Endothelial cell of umbilical vein (primary cell): ENCODE measurements at regions of chr4 and their contacts with region 1.

Region 1: GRCh38 chr4:182593864-182594263 is 323.3 kb downstream of the DCTD start:
- DNase-seq: peak; percentile 95
- H3K4me3 ChIP-seq: peak overlapping the region in 1 of 3 experiments; percentile 44
- H3K27ac ChIP-seq: peak overlapping the region; percentile 91
- H3K4me1 ChIP-seq: peaks cover 26% of the 10 kb centered on the region
- H3K27me3 ChIP-seq: no peaks in the 10 kb centered on the region
- CTCF ChIP-seq: no peak
- POLR2A ChIP-seq: no peak

Region 2: GRCh38 chr4:182354867-182355266 is 239.0 kb before region 1 on chr4:
- CTCF ChIA-PET with region 1: no interaction called
- POLR2A ChIA-PET with region 1: no interaction called
- dilution Hi-C with region 1: no loop called
- intact Hi-C with region 1: no loop called
- DNase-seq: no peak
- H3K4me3 ChIP-seq: no peak overlapping the region
- H3K27ac ChIP-seq: no peak overlapping the region
- H3K4me1 ChIP-seq: no peaks in the 10 kb centered on the region
- H3K27me3 ChIP-seq: no peaks in the 10 kb centered on the region
- CTCF ChIP-seq: no peak
- POLR2A ChIP-seq: no peak

Region 3: DNA sequence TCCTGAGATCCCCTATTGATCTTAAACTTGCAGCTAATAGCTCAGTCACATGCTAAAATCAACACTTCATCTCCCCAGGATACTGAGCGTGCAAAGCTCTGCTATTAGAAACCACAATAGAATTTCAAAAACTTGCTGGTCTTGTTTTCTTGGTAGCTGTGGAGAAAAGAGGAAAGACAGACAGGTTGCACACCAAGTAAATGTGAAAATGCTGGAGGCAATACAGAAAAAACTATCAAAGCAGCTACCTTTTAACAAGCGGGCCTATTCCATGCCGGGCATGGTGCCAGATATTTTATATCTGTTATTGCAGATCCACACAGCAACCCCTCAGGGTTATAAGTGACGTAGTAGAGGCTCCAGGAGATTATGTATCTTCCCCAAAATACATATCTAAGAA is 151.4 kb after region 1 on chr4:
- CTCF ChIA-PET with region 1: interaction called, 3 read pairs
- POLR2A ChIA-PET with region 1: interaction called, 4 read pairs
- dilution Hi-C with region 1: no loop called
- intact Hi-C with region 1: loop called (anchors 5 kb)
- DNase-seq: peak; percentile 37
- H3K4me3 ChIP-seq: no peak overlapping the region
- H3K27ac ChIP-seq: no peak overlapping the region
- H3K4me1 ChIP-seq: peaks cover 25% of the 10 kb centered on the region
- H3K27me3 ChIP-seq: no peaks in the 10 kb centered on the region
- CTCF ChIP-seq: no peak
- POLR2A ChIP-seq: no peak

Region 4: DNA sequence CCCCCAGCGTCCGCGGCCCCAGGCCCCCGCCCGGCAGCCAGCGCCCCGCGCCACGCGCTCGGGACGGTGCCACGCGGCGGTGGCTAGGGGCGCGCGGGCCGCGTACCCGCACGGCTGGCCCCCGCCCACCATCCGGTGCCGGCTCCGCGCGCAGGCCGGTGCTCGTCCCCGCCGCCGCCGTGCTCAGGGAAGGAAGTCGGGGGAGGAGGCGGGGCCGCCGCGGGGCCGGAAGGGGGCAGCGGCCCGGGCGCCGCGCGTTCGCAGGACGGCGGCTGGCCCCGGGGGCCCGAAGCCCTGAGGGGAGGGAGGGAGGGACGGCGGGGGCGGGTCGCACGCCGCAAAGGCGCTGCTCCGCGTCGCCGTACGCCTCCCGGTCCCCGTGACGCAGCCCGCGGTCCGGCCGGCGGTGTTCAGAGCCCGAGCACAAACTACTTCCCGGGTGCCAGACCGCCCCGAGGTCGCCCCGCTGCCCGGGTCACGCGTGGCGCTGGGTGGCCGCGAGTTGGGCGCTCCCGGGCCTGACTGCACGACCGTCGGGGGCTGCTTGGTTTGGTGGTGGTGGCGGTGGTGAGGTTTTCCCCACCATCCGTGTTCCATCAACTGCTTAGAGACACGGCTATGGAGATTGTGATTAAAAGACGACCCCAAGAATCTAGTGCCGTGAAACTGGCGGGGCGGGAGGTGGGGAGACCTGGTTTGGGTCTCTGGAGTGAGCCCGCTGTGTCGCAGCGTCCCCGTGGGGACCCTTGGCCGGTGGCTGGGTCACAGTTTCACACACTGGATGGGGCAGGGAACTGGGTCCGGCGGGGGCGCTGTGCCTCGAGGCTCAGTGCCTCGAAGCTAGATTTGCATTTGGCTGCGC is 323.5 kb after region 1 on chr4 and contains the start of gene DCTD:
- CTCF ChIA-PET with region 1: no interaction called
- POLR2A ChIA-PET with region 1: no interaction called
- dilution Hi-C with region 1: no loop called
- intact Hi-C with region 1: loop called (anchors 5 kb)
- DNase-seq: peak; percentile 60
- H3K4me3 ChIP-seq: peak within 1 kb of the TSS; percentile 63 to 76 (median 70)
- H3K27ac ChIP-seq: peak within 1 kb of the TSS; percentile 82
- H3K4me1 ChIP-seq: peaks cover 16% of the 10 kb centered on the region
- H3K27me3 ChIP-seq: peaks cover 2 to 9% of the 10 kb centered on the region in 2 experiments
- CTCF ChIP-seq: peak; percentile 38 to 63
- POLR2A ChIP-seq: peak; percentile 21
- total RNA-seq, gene DCTD: 106 and 111 TPM in 2 replicates